GM10248 (cell line): ENCODE measurements at regions of chr17 and their contacts with region 1.

Region 1: DNA sequence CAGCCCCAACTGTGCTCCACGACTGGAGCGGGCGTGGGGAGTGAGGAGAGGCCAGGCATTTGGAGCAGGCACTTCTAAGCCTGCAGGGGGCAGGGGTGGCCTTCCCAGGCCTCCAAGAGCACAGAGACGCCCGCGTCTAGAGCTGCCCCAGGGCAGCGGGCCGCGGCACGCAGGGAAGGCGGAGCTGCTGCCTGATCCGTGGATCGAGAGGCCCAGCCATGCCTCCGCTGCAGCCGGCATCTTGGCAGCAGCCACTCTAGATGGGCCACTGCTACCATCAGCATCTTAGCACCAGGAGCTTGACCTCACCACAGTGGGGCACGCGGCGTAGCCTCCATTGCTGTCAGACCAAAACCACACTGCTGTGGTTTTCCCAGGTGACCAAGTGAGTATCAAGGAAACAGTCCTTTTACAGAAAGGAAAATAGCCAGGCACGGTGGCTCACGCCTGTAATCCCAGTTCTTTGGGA is 20.4 kb upstream of the WDR45B start:
- DNase-seq: peak; percentile 83
- CTCF ChIP-seq: peak; percentile 66

Region 2: DNA sequence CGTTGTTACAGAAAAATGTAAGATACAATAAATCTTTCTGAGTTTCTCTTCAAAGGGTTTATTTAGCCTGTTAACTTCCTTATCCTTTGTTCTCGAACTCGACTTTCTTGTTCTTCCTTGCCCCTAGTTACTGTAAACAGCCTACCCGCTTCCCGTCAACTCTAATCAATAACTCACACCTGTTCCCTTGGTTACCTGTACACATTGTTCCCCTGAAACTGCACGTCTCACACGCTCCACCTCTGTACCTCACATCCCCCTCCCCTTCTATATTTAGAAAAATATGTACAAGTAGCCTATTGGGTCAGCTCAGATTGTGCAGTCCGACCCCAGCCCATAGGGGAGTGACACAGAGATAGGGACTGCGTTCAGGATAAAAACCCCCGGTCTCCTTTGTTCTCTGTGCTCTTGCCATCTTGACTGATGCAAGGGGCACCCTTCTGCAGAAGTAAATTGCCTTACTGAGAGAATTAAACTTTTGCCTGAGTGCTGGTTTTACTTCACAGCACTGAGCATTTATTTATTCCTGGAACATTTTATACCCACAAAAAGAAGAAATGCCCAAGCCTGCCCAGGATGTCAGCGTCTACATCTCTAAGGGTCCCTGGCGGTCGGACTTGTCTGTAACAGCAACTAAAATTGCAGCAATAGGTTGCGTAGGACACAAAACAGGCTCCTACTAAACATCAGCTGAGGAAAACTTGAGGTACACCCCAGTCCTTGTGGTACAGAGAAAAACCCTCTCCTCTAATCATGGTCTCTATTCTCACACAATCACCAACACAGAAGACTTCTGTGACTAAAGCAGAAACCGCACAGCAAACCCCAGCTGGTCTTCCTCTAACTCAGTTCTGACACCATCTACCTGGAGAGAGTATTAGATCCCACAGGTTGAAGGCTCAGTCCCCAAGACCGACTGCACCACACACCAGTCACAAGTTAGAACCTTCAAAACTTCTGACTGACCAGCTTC is 31.8 kb before region 1 on chr17:
- CTCF ChIA-PET with region 1: no interaction called
- POLR2A ChIA-PET with region 1: no interaction called
- DNase-seq: no peak
- CTCF ChIP-seq: no peak

Region 3: GRCh38 chr17:82657926-82658325 is 10.7 kb before region 1 on chr17:
- CTCF ChIA-PET with region 1: interaction called, 13 read pairs
- POLR2A ChIA-PET with region 1: no interaction called
- DNase-seq: no peak
- CTCF ChIP-seq: no peak

Region 4: DNA sequence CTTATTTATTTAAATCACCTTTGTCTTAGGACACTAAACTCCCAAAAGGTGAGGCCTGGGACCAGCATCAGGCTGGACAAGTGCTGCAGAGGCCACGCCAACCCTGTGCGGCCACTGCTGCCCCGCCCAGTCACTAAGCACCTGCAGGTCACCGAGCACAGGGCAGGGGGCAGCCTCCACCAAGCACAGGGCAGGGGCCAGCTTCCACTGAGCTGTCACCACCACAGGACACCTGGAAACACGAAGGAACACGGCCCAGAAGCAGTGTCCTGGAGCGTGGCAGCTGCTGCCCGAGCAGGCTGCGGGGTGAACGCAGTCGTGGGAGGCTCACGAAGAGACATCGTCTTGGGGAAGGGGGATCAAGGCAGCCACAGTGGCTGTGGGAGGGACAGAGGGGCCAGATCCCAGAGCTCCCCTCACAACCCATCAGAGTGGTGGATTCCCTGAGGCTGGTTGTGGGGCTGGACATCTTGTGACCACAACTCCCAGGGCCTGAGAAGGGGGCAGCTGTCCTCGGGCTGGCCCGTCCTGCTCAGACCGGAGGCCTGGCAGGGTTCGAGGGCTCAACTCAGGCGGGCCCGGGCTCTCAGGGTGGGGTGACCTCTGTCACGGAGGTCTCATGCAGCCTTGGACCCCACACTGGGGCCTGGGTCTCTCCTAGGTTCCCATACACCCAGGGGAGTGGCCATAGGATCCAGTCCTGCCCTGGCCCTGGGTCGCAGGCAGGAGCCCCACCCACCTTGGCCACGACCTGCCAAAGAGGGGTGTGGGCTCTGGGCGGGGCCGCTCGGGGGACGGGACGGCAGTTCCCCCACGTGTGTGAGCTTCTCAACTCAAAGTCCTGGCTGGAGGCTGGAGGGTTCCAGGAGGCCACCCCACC is 11.2 kb after region 1 on chr17:
- CTCF ChIA-PET with region 1: interaction called, 11 read pairs
- POLR2A ChIA-PET with region 1: no interaction called
- DNase-seq: no peak
- CTCF ChIP-seq: no peak

Region 5: GRCh38 chr17:82775001-82775823 is 106.5 kb after region 1 on chr17:
- CTCF ChIA-PET with region 1: interaction called, 17 read pairs
- POLR2A ChIA-PET with region 1: no interaction called
- DNase-seq: peak; percentile 68
- CTCF ChIP-seq: peak; percentile 80